HepG2 (cell line): ENCODE measurements at regions of chr5 and their contacts with region 1.

Region 1: GRCh38 chr5:156103155-156103885 is 223.6 kb upstream of the SGCD start:
- DNase-seq: no peak
- ATAC-seq: no peak
- H3K4me3 ChIP-seq: no peak overlapping the region
- H3K27ac ChIP-seq: no peak overlapping the region
- H3K4me1 ChIP-seq: no peaks in the 10 kb centered on the region
- H3K27me3 ChIP-seq: no peaks in the 10 kb centered on the region
- CTCF ChIP-seq: no peak
- EP300 ChIP-seq: no peak
- POLR2A ChIP-seq: no peak
- RAD21 ChIP-seq: no peak

Region 2: GRCh38 chr5:156147251-156147947 is 44.1 kb after region 1 on chr5:
- CTCF ChIA-PET with region 1: no interaction called
- POLR2A ChIA-PET with region 1: no interaction called
- in situ Hi-C with region 1: no loop called
- intact Hi-C with region 1: no loop called
- DNase-seq: no peak
- ATAC-seq: no peak
- H3K4me3 ChIP-seq: no peak overlapping the region
- H3K27ac ChIP-seq: no peak overlapping the region
- H3K4me1 ChIP-seq: no peaks in the 10 kb centered on the region
- H3K27me3 ChIP-seq: no peaks in the 10 kb centered on the region
- CTCF ChIP-seq: no peak
- EP300 ChIP-seq: no peak
- POLR2A ChIP-seq: no peak
- RAD21 ChIP-seq: no peak

Region 3: DNA sequence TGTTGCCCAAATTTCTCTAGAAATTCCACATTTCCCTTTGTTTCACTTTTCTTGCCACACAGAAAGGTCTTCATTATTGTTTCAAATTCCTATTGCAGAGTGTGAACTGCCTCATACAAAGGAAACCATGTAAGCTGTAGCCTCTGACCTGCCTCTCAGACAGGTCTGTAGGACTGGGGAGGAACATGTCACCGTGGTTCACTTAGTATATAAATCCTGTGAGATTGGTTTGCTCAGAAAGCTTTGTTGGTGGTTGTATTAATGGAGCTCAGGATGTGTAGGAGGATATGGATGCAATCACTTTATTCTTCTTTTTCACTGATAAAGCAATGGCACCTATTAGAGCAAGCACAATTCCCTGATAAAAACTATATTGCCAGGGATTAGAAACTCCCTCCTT is 227.9 kb after region 1 on chr5:
- CTCF ChIA-PET with region 1: no interaction called
- POLR2A ChIA-PET with region 1: no interaction called
- in situ Hi-C with region 1: no loop called
- intact Hi-C with region 1: no loop called
- DNase-seq: no peak
- ATAC-seq: no peak
- H3K4me3 ChIP-seq: no peak overlapping the region
- H3K27ac ChIP-seq: no peak overlapping the region
- H3K4me1 ChIP-seq: no peaks in the 10 kb centered on the region
- H3K27me3 ChIP-seq: 0 out of 5 replicates have a peak, but pooled peaks cover 0 to 4% of the 10 kb centered on the region in 2 experiments
- CTCF ChIP-seq: no peak
- EP300 ChIP-seq: no peak
- POLR2A ChIP-seq: no peak
- RAD21 ChIP-seq: no peak

Region 4: GRCh38 chr5:156359476-156359875 is 256.2 kb after region 1 on chr5:
- CTCF ChIA-PET with region 1: no interaction called
- POLR2A ChIA-PET with region 1: no interaction called
- in situ Hi-C with region 1: no loop called
- intact Hi-C with region 1: loop called (anchors 10 kb)
- DNase-seq: no peak
- ATAC-seq: no peak
- H3K4me3 ChIP-seq: no peak overlapping the region
- H3K27ac ChIP-seq: no peak overlapping the region
- H3K4me1 ChIP-seq: no peaks in the 10 kb centered on the region
- H3K27me3 ChIP-seq: no peaks in the 10 kb centered on the region
- CTCF ChIP-seq: no peak
- EP300 ChIP-seq: no peak
- POLR2A ChIP-seq: no peak
- RAD21 ChIP-seq: no peak